GM12878 (cell line): ENCODE measurements at regions of chr7 and their contacts with region 1.

Region 1: GRCh38 chr7:7761340-7761980 is 43.1 kb upstream of the RPA3 start:
- DNase-seq: no peak
- ATAC-seq: peak; percentile 70
- H3K4me3 ChIP-seq: peak overlapping the region; percentile 56
- H3K27ac ChIP-seq: peak overlapping the region; percentile 55
- H3K4me1 ChIP-seq: peaks cover 6% of the 10 kb centered on the region
- H3K27me3 ChIP-seq: no peaks in the 10 kb centered on the region
- CTCF ChIP-seq: peak in 2 of 3 experiments; percentile 32 to 50; a peak in 4 of 6 replicates
- EP300 ChIP-seq: no peak
- POLR2A ChIP-seq: no peak
- RAD21 ChIP-seq: peak; percentile 61

Region 2: DNA sequence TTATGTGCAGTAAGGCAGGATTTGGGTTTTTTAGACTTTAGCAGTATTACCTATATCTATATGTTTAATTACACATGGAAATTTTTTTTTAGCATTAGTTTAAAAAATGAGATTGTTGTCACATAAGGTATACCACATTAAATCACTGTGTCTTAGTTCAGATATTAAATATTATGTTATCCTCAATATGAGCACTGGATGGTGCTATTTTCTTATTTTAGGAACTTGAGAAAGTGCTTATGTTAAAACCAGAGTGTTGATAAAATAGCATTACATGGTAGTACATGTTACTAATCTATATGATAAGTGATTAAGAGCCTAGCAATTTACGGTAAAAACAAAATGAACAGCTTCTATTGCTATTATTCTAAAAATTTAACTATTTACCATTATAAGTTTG is 166.0 kb before region 1 on chr7:
- CTCF ChIA-PET with region 1: interaction called, 4 read pairs
- POLR2A ChIA-PET with region 1: no interaction called
- RAD21 ChIA-PET with region 1: interaction called, 5 read pairs
- SMC1A ChIA-PET with region 1: interaction called, 18 read pairs
- in situ Hi-C with region 1: no loop called
- intact Hi-C with region 1: loop called (anchors 10 kb)
- DNase-seq: no peak
- ATAC-seq: peak; percentile 60
- H3K4me3 ChIP-seq: no peak overlapping the region
- H3K27ac ChIP-seq: no peak overlapping the region
- H3K4me1 ChIP-seq: no peaks in the 10 kb centered on the region
- H3K27me3 ChIP-seq: no peaks in the 10 kb centered on the region
- CTCF ChIP-seq: peak in 1 of 3 experiments; percentile 13; a peak in 1 of 6 replicates
- EP300 ChIP-seq: no peak
- POLR2A ChIP-seq: no peak
- RAD21 ChIP-seq: peak; percentile 29; the same call in 1 of the 2 replicates

Region 3: DNA sequence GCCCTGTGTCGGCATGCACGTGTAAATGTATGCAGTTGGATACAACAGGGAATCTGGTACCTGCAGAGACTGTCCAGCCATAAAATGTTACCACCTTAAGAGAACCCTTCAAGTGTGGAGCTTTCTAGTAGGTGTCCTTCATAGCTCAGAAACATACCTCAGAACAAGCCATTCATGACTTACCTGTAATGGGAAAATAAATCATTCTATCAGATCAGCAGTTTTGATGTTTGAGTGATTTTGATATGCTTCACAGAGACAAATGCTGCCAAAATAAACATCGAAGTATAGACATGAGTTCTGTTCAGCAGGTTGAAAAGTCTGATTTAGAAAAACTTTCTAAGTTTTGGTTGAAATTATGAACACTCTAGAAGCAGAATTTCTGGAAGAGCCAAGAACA is 154.4 kb before region 1 on chr7:
- CTCF ChIA-PET with region 1: no interaction called
- POLR2A ChIA-PET with region 1: no interaction called
- RAD21 ChIA-PET with region 1: no interaction called
- SMC1A ChIA-PET with region 1: no interaction called
- in situ Hi-C with region 1: no loop called
- intact Hi-C with region 1: no loop called
- DNase-seq: no peak
- ATAC-seq: no peak
- H3K4me3 ChIP-seq: no peak overlapping the region
- H3K27ac ChIP-seq: no peak overlapping the region
- H3K4me1 ChIP-seq: no peaks in the 10 kb centered on the region
- H3K27me3 ChIP-seq: no peaks in the 10 kb centered on the region
- CTCF ChIP-seq: no peak
- EP300 ChIP-seq: no peak
- POLR2A ChIP-seq: no peak
- RAD21 ChIP-seq: no peak

Region 4: DNA sequence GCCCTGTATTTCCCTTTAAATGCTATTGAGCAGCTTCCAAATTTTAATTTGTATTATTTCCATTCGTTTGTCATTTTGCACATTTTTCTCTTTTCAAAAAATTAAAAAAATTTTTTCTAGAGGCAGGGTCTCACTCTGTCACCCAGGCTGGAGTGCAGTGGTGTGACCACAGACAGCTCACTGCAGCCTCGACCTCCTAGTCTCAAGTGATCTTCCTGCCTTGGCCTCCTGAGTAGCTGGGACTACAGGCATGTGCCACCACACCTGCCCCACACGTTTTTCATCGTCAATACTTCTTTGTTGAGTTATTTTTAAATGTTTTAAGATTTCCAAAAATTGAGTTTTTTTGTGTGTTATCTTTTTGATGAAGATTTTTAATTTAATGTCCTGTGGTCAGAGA is 47.7 kb before region 1 on chr7:
- CTCF ChIA-PET with region 1: interaction called, 13 read pairs
- POLR2A ChIA-PET with region 1: no interaction called
- RAD21 ChIA-PET with region 1: interaction called, 9 read pairs
- SMC1A ChIA-PET with region 1: interaction called, 16 read pairs
- in situ Hi-C with region 1: no loop called
- intact Hi-C with region 1: no loop called
- DNase-seq: no peak
- ATAC-seq: peak; percentile 52
- H3K4me3 ChIP-seq: no peak overlapping the region
- H3K27ac ChIP-seq: no peak overlapping the region
- H3K4me1 ChIP-seq: peaks cover 1% of the 10 kb centered on the region; the same call in 1 of the 2 replicates
- H3K27me3 ChIP-seq: no peaks in the 10 kb centered on the region
- CTCF ChIP-seq: no peak
- EP300 ChIP-seq: no peak
- POLR2A ChIP-seq: no peak
- RAD21 ChIP-seq: no peak

Region 5: GRCh38 chr7:7772397-7772821 is 10.9 kb after region 1 on chr7:
- CTCF ChIA-PET with region 1: interaction called, 6 read pairs
- POLR2A ChIA-PET with region 1: interaction called, 5 read pairs
- RAD21 ChIA-PET with region 1: interaction called, 20 read pairs
- SMC1A ChIA-PET with region 1: interaction called, 35 read pairs
- in situ Hi-C with region 1: no loop called
- intact Hi-C with region 1: no loop called
- DNase-seq: no peak
- ATAC-seq: peak; percentile 77
- H3K4me3 ChIP-seq: 0 out of 2 replicates have a peak overlapping the region, but pooled peaks have one; percentile 6
- H3K27ac ChIP-seq: no peak overlapping the region
- H3K4me1 ChIP-seq: peaks cover 18% of the 10 kb centered on the region
- H3K27me3 ChIP-seq: no peaks in the 10 kb centered on the region
- CTCF ChIP-seq: no peak
- EP300 ChIP-seq: no peak
- POLR2A ChIP-seq: no peak
- RAD21 ChIP-seq: no peak

Region 6: DNA sequence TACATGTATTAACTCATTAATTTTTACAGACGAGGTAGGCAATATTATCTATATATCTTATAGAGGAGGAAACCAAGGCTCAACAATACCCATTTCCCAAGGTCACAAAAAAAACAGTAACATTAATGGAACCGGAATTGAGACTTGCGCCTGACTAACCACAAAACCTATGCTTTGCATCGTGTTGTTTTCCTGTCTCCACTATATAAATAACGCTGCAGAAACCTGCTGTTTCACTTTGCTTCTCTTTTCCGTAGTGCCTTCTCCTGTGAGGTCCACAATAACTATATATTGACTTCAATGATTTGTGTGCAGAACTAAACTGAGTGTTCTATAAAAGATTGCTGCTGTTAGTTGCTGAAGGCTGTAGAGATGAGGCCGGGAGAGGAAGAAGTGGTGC is 54.6 kb after region 1 on chr7:
- CTCF ChIA-PET with region 1: interaction called, 4 read pairs
- POLR2A ChIA-PET with region 1: interaction called, 3 read pairs
- RAD21 ChIA-PET with region 1: interaction called, 27 read pairs
- SMC1A ChIA-PET with region 1: interaction called, 36 read pairs
- in situ Hi-C with region 1: no loop called
- intact Hi-C with region 1: loop called (anchors 1 kb)
- DNase-seq: peak; percentile 85
- ATAC-seq: peak; percentile 53
- H3K4me3 ChIP-seq: peak overlapping the region; percentile 32
- H3K27ac ChIP-seq: peak overlapping the region; percentile 67
- H3K4me1 ChIP-seq: peaks cover 43% of the 10 kb centered on the region
- H3K27me3 ChIP-seq: no peaks in the 10 kb centered on the region
- CTCF ChIP-seq: no peak
- EP300 ChIP-seq: peak; percentile 73 to 92
- POLR2A ChIP-seq: 0 out of 2 replicates have a peak, but pooled peaks have one; percentile 29
- RAD21 ChIP-seq: no peak

Region 7: GRCh38 chr7:8035647-8036518 is 274.4 kb after region 1 on chr7:
- CTCF ChIA-PET with region 1: no interaction called
- POLR2A ChIA-PET with region 1: no interaction called
- RAD21 ChIA-PET with region 1: interaction called, 5 read pairs
- SMC1A ChIA-PET with region 1: no interaction called
- in situ Hi-C with region 1: no loop called
- intact Hi-C with region 1: loop called (anchors 5 kb)
- DNase-seq: peak; percentile 23
- ATAC-seq: peak; percentile 88
- H3K4me3 ChIP-seq: no peak overlapping the region
- H3K27ac ChIP-seq: no peak overlapping the region
- H3K4me1 ChIP-seq: no peaks in the 10 kb centered on the region
- H3K27me3 ChIP-seq: no peaks in the 10 kb centered on the region
- CTCF ChIP-seq: peak in 2 of 3 experiments; percentile 50 to 57; a peak in 4 of 6 replicates
- EP300 ChIP-seq: no peak
- POLR2A ChIP-seq: no peak
- RAD21 ChIP-seq: peak; percentile 38

Region 8: GRCh38 chr7:8295638-8296361 is 534.3 kb after region 1 on chr7:
- CTCF ChIA-PET with region 1: interaction called, 5 read pairs
- POLR2A ChIA-PET with region 1: no interaction called
- RAD21 ChIA-PET with region 1: interaction called, 3 read pairs
- SMC1A ChIA-PET with region 1: interaction called, 4 read pairs
- in situ Hi-C with region 1: no loop called
- intact Hi-C with region 1: loop called (anchors 10 kb)
- DNase-seq: peak; percentile 43
- ATAC-seq: peak; percentile 99
- H3K4me3 ChIP-seq: no peak overlapping the region
- H3K27ac ChIP-seq: no peak overlapping the region
- H3K4me1 ChIP-seq: no peaks in the 10 kb centered on the region
- H3K27me3 ChIP-seq: no peaks in the 10 kb centered on the region
- CTCF ChIP-seq: peak; percentile 64 to 90 (median 75)
- EP300 ChIP-seq: no peak
- POLR2A ChIP-seq: no peak
- RAD21 ChIP-seq: peak; percentile 92